Astrocyte of the cerebellum (primary cell): ENCODE measurements at regions of chrX and their contacts with region 1.

Region 1: DNA sequence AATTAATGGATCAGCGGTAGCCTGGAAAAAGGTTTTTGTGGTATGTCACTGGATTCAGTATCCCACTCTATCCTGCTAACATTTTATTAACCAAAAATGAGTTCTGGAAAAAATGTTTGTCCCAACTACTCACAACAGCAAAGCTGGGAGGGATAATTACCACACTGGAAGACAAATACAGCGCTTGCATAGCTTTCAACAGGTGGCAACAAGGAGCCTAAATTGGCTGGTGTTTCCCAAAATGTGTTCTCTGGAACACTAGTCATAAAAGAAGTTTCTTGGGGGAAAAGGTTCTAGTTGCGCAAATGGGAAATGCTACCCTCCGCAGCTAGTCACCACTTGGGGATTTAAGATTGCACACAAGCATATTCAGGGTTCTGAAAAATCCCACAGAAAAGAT is 54.6 kb downstream of the BEND2 start:
- DNase-seq: no peak
- H3K4me3 ChIP-seq: no peak overlapping the region
- CTCF ChIP-seq: no peak

Region 2: DNA sequence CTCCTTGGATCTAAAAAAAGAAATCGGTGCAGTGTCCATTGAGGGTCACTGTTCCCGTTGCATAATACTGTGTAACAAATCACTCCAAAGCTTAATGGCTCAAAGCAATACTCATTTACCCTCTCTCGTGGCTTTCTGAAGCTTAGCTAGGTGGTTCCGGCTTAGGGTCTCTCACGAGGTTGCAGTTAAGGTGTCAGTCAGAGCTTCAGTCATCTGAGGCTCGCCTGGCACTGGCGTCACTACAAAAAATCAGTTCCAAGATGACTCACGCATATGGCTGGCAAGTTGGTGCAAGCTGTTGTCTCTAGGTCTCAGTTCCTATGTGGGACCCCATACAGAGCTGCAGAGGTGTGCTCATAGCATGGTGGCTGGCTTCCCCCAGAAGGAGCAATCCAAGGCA is 36.4 kb before region 1 on chrX:
- in situ Hi-C with region 1: loop called (anchors 5 kb)
- DNase-seq: no peak
- H3K4me3 ChIP-seq: no peak overlapping the region
- CTCF ChIP-seq: no peak